Naive thymus-derived CD4-positive, alpha-beta T cell (primary cell): ENCODE measurements at regions of chr9 and their contacts with region 1.

Region 1: DNA sequence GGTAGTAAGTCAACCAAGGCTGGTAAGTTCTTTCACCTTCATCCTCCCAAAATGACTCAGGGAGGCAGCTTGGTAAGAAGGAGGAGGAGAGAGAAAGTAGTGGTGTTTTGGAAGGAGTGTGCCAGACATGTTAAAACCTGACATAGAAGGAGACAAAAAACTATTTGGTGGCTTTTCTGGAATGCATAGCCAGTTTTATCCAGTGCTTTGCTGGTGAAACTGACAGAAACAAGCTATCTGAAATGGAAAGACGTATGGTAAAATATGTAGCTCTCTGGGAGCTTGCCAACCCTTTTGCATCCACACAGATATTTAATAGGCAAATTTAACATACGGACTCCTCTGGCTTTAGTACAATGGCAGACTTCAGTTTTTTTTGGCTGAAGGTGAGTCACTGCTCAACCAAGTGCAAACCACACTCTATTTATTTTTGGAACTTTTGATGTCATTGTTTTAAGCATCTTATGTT is 45.4 kb downstream of the RAB14 start:
- DNase-seq: no peak
- ATAC-seq: peak; percentile 59
- H3K4me3 ChIP-seq: no peak overlapping the region
- H3K4me3 Mint-ChIP-seq: peak overlapping the region in 2 of 10 donors; percentile 14 to 46
- H3K27ac ChIP-seq: no peak overlapping the region
- H3K27ac Mint-ChIP-seq: peak overlapping the region in 8 of 9 donors; percentile 29 to 90 (median 72)
- H3K4me1 ChIP-seq: peaks cover 5 to 8% of the 10 kb centered on the region in 2 donors
- H3K4me1 Mint-ChIP-seq: peaks cover 14 to 56% (median 45%) of the 10 kb centered on the region in 7 donors
- H3K27me3 ChIP-seq: no peaks in the 10 kb centered on the region
- H3K27me3 Mint-ChIP-seq: no peaks in the 10 kb centered on the region

Region 2: GRCh38 chr9:120909904-120910303 is 246.4 kb before region 1 on chr9:
- CTCF ChIA-PET with region 1: no interaction called
- POLR2A ChIA-PET with region 1: no interaction called
- intact Hi-C with region 1: no loop called
- DNase-seq: peak in 1 of 9 donors; percentile 67
- ATAC-seq: peak; percentile 50
- H3K4me3 ChIP-seq: peak overlapping the region; percentile 10
- H3K4me3 Mint-ChIP-seq: peak overlapping the region in 6 of 10 donors; percentile 25 to 59 (median 32)
- H3K27ac ChIP-seq: peak overlapping the region; percentile 69
- H3K27ac Mint-ChIP-seq: peak overlapping the region in 8 of 9 donors; percentile 59 to 95 (median 82)
- H3K4me1 ChIP-seq: peaks cover 57 to 59% of the 10 kb centered on the region in 2 donors
- H3K4me1 Mint-ChIP-seq: peaks cover 46 to 88% (median 80%) of the 10 kb centered on the region in 7 donors
- H3K27me3 ChIP-seq: no peaks in the 10 kb centered on the region
- H3K27me3 Mint-ChIP-seq: no peaks in the 10 kb centered on the region

Region 3: DNA sequence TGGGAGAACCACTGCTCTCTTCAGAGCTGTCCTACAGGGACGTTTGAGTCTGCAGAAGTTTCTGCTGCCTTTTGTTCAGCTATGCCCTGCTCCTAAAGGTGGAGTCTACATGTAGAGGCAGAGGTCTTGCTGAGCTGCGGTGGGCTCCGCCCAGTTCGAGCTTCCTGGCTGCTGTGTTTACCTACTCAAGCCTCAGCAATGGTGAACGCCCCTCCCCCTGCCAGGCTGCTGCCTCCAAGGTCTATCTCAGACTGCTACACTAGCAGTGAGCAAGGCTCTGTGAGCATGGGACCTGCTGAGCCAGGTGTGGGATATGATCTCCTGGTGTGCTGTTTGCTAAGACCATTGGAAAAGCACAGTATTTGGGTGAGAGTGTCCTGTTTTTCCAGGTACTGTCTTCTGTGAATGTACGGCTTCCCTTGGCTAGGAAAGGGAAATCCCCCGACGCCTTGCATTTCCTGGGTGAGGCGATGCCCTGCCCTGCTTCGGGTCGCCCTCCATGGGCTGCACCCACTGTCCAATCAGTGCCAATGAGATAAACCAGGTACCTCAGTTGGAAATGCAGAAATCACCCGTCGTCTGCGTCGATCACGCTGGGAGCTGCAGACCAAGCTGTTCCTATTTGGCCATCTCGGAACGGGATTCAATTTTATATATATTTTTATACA is 23.0 kb before region 1 on chr9:
- CTCF ChIA-PET with region 1: interaction called, 3 read pairs
- POLR2A ChIA-PET with region 1: interaction called, 5 read pairs
- intact Hi-C with region 1: loop called in 1 of 2 experiments (anchors 2 kb)
- DNase-seq: peak; percentile 39 to 88 (median 79)
- ATAC-seq: peak; percentile 99
- H3K4me3 ChIP-seq: peak overlapping the region; percentile 51
- H3K4me3 Mint-ChIP-seq: peak overlapping the region; percentile 21 to 82 (median 74)
- H3K27ac ChIP-seq: peak overlapping the region; percentile 46
- H3K27ac Mint-ChIP-seq: peak overlapping the region; percentile 76 to 99 (median 90)
- H3K4me1 ChIP-seq: peaks cover 23 to 40% of the 10 kb centered on the region in 2 donors
- H3K4me1 Mint-ChIP-seq: peaks cover 48 to 90% (median 82%) of the 10 kb centered on the region in 7 donors
- H3K27me3 ChIP-seq: no peaks in the 10 kb centered on the region
- H3K27me3 Mint-ChIP-seq: no peaks in the 10 kb centered on the region

Region 4: DNA sequence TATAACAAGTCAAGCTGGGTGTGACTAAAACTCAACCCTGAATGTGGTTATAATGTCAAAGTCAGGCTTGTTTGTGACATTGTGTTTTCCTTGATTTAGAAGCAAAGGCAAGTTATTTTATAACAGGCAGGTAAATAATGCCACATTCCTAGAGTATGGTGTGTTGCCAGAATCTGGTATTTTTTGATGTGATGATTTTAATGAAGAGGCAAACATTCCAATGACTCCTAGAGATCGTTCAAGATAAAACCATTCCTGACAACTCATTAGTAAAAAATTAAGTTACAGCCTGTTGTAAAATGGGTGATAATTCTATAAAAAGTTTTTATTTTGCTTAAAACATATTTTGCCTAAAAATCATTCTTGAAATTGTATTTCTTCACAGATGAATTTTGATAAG is 14.6 kb before region 1 on chr9:
- CTCF ChIA-PET with region 1: interaction called, 3 read pairs
- POLR2A ChIA-PET with region 1: no interaction called
- intact Hi-C with region 1: loop called in 1 of 2 experiments (anchors 2 kb)
- DNase-seq: no peak
- ATAC-seq: no peak
- H3K4me3 ChIP-seq: no peak overlapping the region
- H3K4me3 Mint-ChIP-seq: no peak overlapping the region
- H3K27ac ChIP-seq: peak overlapping the region; percentile 6
- H3K27ac Mint-ChIP-seq: peak overlapping the region in 2 of 9 donors; percentile 69 to 82
- H3K4me1 ChIP-seq: peaks cover 0 to 1% of the 10 kb centered on the region in 2 donors
- H3K4me1 Mint-ChIP-seq: peaks cover 4 to 24% (median 16%) of the 10 kb centered on the region in 7 donors
- H3K27me3 ChIP-seq: no peaks in the 10 kb centered on the region
- H3K27me3 Mint-ChIP-seq: no peaks in the 10 kb centered on the region

Region 5: DNA sequence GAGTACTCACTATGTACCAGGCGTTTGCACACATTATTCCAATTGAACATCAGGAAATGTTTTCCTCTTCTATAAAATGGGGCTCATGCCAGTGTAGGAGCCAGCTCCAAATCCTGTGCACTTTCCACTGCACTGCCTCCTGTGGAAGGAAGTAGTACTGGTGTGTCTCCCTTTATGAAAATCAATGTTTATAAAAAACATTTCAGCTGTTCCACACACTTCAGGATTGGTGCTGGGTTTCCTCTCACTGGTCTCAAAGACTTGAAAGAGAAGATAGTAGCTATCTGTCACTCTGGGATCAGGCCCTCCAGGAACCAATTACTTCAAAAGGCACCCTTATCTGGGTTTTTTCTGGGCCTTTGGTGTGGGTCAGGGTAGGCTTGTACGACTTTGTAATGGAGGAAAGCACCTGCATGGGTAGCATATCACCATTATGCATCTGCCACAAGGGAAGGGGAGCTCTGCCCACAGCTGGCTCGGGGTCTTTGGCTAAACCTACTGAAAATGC is 12.9 kb after region 1 on chr9:
- CTCF ChIA-PET with region 1: interaction called, 5 read pairs
- POLR2A ChIA-PET with region 1: interaction called, 3 read pairs
- intact Hi-C with region 1: loop called in 1 of 2 experiments (anchors 2 kb)
- DNase-seq: peak in 7 of 9 donors; percentile 20 to 46 (median 41)
- ATAC-seq: peak; percentile 85
- H3K4me3 ChIP-seq: no peak overlapping the region
- H3K4me3 Mint-ChIP-seq: peak overlapping the region in 7 of 10 donors; percentile 21 to 70 (median 53)
- H3K27ac ChIP-seq: peak overlapping the region; percentile 67
- H3K27ac Mint-ChIP-seq: peak overlapping the region; percentile 38 to 94 (median 84)
- H3K4me1 ChIP-seq: peaks cover 0 to 23% of the 10 kb centered on the region in 2 donors
- H3K4me1 Mint-ChIP-seq: peaks cover 10 to 29% (median 25%) of the 10 kb centered on the region in 7 donors
- H3K27me3 ChIP-seq: no peaks in the 10 kb centered on the region
- H3K27me3 Mint-ChIP-seq: no peaks in the 10 kb centered on the region